GM10248 (cell line): ENCODE measurements at regions of chr17 and their contacts with region 1.

Region 1: DNA sequence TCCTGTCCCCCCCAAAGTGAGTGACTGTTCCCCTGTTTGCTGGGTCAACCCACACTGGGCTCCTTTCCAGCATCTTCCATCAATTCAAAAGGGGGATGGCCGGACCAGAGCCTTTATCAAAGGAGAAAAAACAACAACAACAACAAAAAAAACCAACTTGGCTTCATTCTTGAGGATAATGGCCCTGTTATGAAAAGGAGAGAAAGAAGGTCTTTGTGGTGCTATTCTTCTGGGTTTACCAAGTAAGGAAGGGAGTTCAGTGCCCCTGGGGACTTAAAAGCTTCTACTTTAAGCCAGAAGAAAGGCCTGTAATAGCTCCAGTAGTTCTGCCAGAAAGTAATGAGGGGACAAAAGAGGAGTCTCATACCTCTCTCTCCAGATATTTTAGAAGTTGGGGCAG is 71.5 kb downstream of the RGS9 start:
- DNase-seq: no peak
- CTCF ChIP-seq: no peak

Region 2: GRCh38 chr17:65219124-65219523 is 10.4 kb after region 1 on chr17:
- CTCF ChIA-PET with region 1: interaction called, 10 read pairs
- POLR2A ChIA-PET with region 1: no interaction called
- DNase-seq: no peak
- CTCF ChIP-seq: peak; percentile 26